ENCODE measurements at regions of chr3 and their contacts with region 1.

Region 1: GRCh38 chr3:191414732-191415131 is 46.2 kb upstream of the PYDC2 start:
- DNase-seq: no peak
- H3K4me3 ChIP-seq: no peak overlapping the region
- H3K27ac ChIP-seq: no peak overlapping the region
- H3K4me1 ChIP-seq: no peaks in the 10 kb centered on the region
- H3K27me3 ChIP-seq: no peaks in the 10 kb centered on the region
- CTCF ChIP-seq: no peak
- POLR2A ChIP-seq: no peak

Region 2: DNA sequence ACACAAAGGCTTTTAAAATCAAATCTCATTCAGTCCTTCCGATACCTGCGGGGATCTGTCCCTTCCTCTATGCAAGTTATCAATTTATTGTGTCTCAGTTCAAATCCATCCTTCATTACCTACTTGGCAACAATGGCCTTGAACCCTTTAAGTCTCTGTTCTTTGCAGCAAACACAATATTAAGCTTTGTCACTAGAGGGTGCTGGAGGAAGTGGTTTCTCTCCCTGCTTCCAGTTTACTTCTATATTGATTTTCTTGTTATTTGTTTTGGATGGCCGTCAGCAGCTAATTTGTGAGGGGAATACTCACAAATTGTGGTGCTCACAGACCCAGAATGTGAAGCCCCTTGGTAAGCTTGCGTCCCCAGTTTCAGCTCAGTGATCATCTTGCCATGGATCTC is 1034.3 kb after region 1 on chr3:
- intact Hi-C with region 1: loop called (anchors 5 kb)
- DNase-seq: no peak
- H3K4me3 ChIP-seq: no peak overlapping the region
- H3K27ac ChIP-seq: no peak overlapping the region
- H3K4me1 ChIP-seq: no peaks in the 10 kb centered on the region
- H3K27me3 ChIP-seq: peaks cover 0 to 10% of the 10 kb centered on the region in 2 donors
- CTCF ChIP-seq: no peak
- POLR2A ChIP-seq: no peak

Measured in breast epithelium (tissue), 4 donors.